ENCODE measurements at regions of chr11 and their contacts with region 1.

Region 1: DNA sequence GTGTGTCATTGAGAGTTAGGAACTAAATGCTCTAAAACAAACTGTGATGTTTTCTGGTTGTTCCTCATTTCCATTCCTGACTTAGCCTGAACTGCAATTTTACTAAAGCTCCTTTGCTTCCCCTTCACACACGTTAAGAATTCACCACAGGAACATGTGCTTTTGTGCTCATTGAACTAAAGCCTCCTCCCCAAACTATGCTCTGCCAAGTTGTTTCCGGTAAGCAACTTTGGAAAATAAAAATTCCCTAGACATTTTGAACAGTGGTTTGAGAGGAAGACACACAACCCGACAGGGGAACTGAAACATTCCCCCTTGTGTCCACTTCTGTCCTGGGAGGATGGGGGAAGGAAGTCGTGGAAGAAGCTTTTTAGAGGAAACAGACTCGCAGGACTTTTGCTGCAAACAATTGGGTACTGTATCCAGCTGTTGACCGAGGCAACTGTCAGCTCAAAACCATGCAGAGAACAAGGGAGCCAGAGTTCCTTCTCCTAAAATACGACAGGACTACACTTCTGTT is 66.9 kb downstream of the GAB2 start:
- DNase-seq: peak in 2 of 14 experiments; percentile 24
- ATAC-seq: no peak
- H3K4me3 ChIP-seq: no peak overlapping the region
- H3K4me3 Mint-ChIP-seq: no peak overlapping the region
- H3K27ac ChIP-seq: no peak overlapping the region
- H3K27ac Mint-ChIP-seq: no peak overlapping the region
- H3K4me1 ChIP-seq: peaks cover 7% of the 10 kb centered on the region
- H3K4me1 Mint-ChIP-seq: peaks cover 19% of the 10 kb centered on the region
- H3K27me3 ChIP-seq: no peaks in the 10 kb centered on the region
- H3K27me3 Mint-ChIP-seq: no peaks in the 10 kb centered on the region
- CTCF ChIP-seq: no peak

Region 2: DNA sequence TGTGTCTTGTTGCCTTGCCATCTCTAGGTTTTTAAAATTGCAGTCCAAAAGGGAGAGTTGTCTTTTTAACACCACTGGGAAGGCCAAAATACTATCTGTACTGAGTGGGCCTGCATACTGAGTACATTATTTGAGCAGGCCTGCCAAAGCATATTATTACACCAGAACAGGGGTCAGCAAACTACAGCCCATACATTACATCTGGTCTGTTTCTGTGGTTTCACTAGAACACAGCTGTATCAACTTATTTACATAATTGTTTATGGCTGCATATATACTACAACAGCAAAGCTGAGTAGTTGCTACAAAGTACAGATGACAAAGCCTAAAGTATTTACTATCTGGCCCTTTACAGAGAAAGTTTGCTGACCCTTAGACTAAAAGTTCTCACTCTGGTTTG is 88.0 kb before region 1 on chr11:
- CTCF ChIA-PET with region 1: no interaction called
- POLR2A ChIA-PET with region 1: no interaction called
- intact Hi-C with region 1: loop called in 1 of 2 experiments (anchors 5 kb)
- DNase-seq: no peak
- ATAC-seq: no peak
- H3K4me3 ChIP-seq: no peak overlapping the region
- H3K4me3 Mint-ChIP-seq: no peak overlapping the region
- H3K27ac ChIP-seq: no peak overlapping the region
- H3K27ac Mint-ChIP-seq: no peak overlapping the region
- H3K4me1 ChIP-seq: no peaks in the 10 kb centered on the region
- H3K4me1 Mint-ChIP-seq: no peaks in the 10 kb centered on the region
- H3K27me3 ChIP-seq: no peaks in the 10 kb centered on the region
- H3K27me3 Mint-ChIP-seq: no peaks in the 10 kb centered on the region
- CTCF ChIP-seq: no peak

Region 3: DNA sequence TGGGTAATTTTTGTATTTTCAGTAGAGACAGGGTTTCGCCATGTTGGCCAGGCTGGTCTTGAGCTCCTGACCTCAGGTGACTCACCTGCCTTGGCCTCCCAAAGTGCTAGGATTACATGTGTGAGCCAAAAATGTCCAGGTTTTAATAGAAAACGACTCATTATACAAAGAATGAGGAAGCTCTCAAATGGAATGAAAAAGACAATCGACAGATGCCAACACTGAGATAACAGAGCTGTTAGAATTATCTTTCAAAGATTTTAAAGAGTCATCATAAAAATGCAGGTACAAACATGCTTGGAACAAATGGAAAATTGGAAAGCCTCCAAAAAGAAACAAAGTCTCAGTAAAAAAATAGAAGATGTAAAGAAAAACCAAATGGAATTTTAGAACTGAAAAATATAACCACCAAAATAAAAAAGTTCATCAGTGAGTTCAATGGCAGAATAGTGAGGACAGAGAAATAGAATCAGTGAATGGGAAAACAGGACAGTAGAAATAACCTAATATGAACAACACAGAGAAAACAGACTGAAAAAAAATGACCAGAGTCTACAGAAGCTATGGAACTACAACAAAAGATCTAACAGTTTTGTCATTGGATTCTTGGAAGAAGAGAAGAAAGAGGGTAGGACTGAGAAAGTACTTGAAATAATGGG is 56.0 kb after region 1 on chr11:
- CTCF ChIA-PET with region 1: no interaction called
- POLR2A ChIA-PET with region 1: no interaction called
- intact Hi-C with region 1: loop called in 1 of 2 experiments (anchors 10 kb)
- DNase-seq: no peak
- ATAC-seq: no peak
- H3K4me3 ChIP-seq: no peak overlapping the region
- H3K4me3 Mint-ChIP-seq: no peak overlapping the region
- H3K27ac ChIP-seq: no peak overlapping the region
- H3K27ac Mint-ChIP-seq: no peak overlapping the region
- H3K4me1 ChIP-seq: no peaks in the 10 kb centered on the region
- H3K4me1 Mint-ChIP-seq: no peaks in the 10 kb centered on the region
- H3K27me3 ChIP-seq: no peaks in the 10 kb centered on the region
- H3K27me3 Mint-ChIP-seq: no peaks in the 10 kb centered on the region
- CTCF ChIP-seq: no peak

Measured in CD4-positive, alpha-beta T cell (primary cell).